CD4-positive, alpha-beta T cell (primary cell): ENCODE measurements at regions of chr10 and their contacts with region 1.

Region 1: GRCh38 chr10:99435986-99436638 is 5.7 kb upstream of the GOT1 start:
- DNase-seq: peak in 3 of 14 experiments; percentile 52 to 61 (median 58)
- ATAC-seq: peak; percentile 61
- H3K4me3 ChIP-seq: no peak overlapping the region
- H3K4me3 Mint-ChIP-seq: peak overlapping the region; percentile 0
- H3K27ac ChIP-seq: no peak overlapping the region
- H3K27ac Mint-ChIP-seq: no peak overlapping the region
- H3K4me1 ChIP-seq: peaks cover 5% of the 10 kb centered on the region
- H3K4me1 Mint-ChIP-seq: peaks cover 38% of the 10 kb centered on the region
- H3K27me3 ChIP-seq: no peaks in the 10 kb centered on the region
- H3K27me3 Mint-ChIP-seq: no peaks in the 10 kb centered on the region
- CTCF ChIP-seq: peak; percentile 78

Region 2: GRCh38 chr10:99612167-99612831 is 176.2 kb after region 1 on chr10:
- CTCF ChIA-PET with region 1: interaction called, 7 read pairs
- POLR2A ChIA-PET with region 1: no interaction called
- intact Hi-C with region 1: loop called (anchors 2 to 5 kb)
- DNase-seq: peak in 4 of 14 experiments; percentile 38 to 75 (median 70)
- ATAC-seq: peak; percentile 71
- H3K4me3 ChIP-seq: no peak overlapping the region
- H3K4me3 Mint-ChIP-seq: peak overlapping the region; percentile 58
- H3K27ac ChIP-seq: peak overlapping the region in 1 of 2 donors; percentile 7
- H3K27ac Mint-ChIP-seq: peak overlapping the region; percentile 48
- H3K4me1 ChIP-seq: peaks cover 7% of the 10 kb centered on the region
- H3K4me1 Mint-ChIP-seq: peaks cover 36% of the 10 kb centered on the region
- H3K27me3 ChIP-seq: no peaks in the 10 kb centered on the region
- H3K27me3 Mint-ChIP-seq: no peaks in the 10 kb centered on the region
- CTCF ChIP-seq: peak; percentile 90

Region 3: GRCh38 chr10:99659031-99659867 is 223.1 kb after region 1 on chr10 and contains the start of gene ENTPD7:
- CTCF ChIA-PET with region 1: interaction called, 3 read pairs
- POLR2A ChIA-PET with region 1: interaction called, 4 read pairs
- intact Hi-C with region 1: loop called in 1 of 2 experiments (anchors 2 kb)
- DNase-seq: peak; percentile 71 to 94 (median 84)
- ATAC-seq: peak; percentile 98
- H3K4me3 ChIP-seq: peak within 1 kb of the TSS; percentile 85
- H3K4me3 Mint-ChIP-seq: peak within 1 kb of the TSS; percentile 87
- H3K27ac ChIP-seq: peak within 1 kb of the TSS in 1 of 2 donors; percentile 7
- H3K27ac Mint-ChIP-seq: peak within 1 kb of the TSS; percentile 46
- H3K4me1 ChIP-seq: peaks cover 16% of the 10 kb centered on the region
- H3K4me1 Mint-ChIP-seq: peaks cover 28% of the 10 kb centered on the region
- H3K27me3 ChIP-seq: no peaks in the 10 kb centered on the region
- H3K27me3 Mint-ChIP-seq: peaks cover 11% of the 10 kb centered on the region
- CTCF ChIP-seq: peak; percentile 29
- total RNA-seq, gene ENTPD7: 1.1 to 1.4 TPM

Region 4: DNA sequence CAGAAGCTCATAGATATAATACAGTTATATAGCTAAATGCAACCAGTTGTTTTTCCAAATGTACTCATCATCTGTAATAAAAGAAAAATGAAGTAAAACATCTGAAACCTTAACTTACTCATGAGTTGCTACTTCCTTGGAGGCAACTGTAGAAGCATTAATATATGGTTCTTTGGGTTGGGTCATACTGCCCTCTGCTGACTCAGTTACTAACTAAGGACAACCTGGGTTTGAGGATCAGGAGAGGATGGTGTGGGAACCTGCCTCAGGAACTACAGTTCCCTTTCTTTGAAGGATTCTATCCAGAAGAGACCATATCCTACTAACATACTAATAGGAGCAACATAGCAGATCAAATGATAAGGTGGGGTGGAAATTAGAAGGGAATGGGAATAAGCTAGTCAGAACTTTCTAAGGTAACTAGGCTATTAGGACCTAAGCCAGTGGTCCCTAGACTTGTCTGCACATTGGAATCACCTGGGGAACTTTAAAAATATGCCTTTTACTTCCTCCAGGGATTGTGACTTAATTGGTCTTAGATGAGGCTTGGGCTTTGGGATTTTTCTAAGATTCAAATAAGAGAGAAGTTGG is 275.1 kb after region 1 on chr10:
- CTCF ChIA-PET with region 1: interaction called, 4 read pairs
- POLR2A ChIA-PET with region 1: no interaction called
- intact Hi-C with region 1: loop called (anchors 1 to 2 kb)
- DNase-seq: peak in 4 of 14 experiments; percentile 40 to 67 (median 55)
- ATAC-seq: peak; percentile 69
- H3K4me3 ChIP-seq: no peak overlapping the region
- H3K4me3 Mint-ChIP-seq: no peak overlapping the region
- H3K27ac ChIP-seq: no peak overlapping the region
- H3K27ac Mint-ChIP-seq: no peak overlapping the region
- H3K4me1 ChIP-seq: no peaks in the 10 kb centered on the region
- H3K4me1 Mint-ChIP-seq: no peaks in the 10 kb centered on the region
- H3K27me3 ChIP-seq: no peaks in the 10 kb centered on the region
- H3K27me3 Mint-ChIP-seq: no peaks in the 10 kb centered on the region
- CTCF ChIP-seq: peak; percentile 59

Region 5: DNA sequence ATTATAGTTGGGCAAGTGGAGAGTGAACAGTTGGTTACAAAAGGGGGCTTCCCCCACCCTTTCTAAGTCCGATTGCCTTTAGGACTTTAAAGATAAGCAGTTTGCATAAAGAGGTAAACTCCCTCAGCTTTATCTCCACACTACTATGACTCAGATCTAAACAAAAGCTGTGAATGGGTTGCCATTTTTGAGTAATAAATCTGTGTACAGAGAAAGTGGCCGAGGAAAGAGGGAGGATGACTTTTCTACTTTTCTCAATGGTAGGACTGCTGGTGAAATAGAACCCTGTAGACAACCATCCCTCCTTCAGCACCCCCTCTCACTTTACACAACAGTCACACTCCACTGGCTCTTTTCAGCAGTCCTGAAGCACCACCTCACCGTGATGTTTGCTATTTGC is 502.5 kb after region 1 on chr10:
- CTCF ChIA-PET with region 1: no interaction called
- POLR2A ChIA-PET with region 1: no interaction called
- intact Hi-C with region 1: no loop called
- DNase-seq: no peak
- ATAC-seq: no peak
- H3K4me3 ChIP-seq: no peak overlapping the region
- H3K4me3 Mint-ChIP-seq: no peak overlapping the region
- H3K27ac ChIP-seq: no peak overlapping the region
- H3K27ac Mint-ChIP-seq: no peak overlapping the region
- H3K4me1 ChIP-seq: no peaks in the 10 kb centered on the region
- H3K4me1 Mint-ChIP-seq: no peaks in the 10 kb centered on the region
- H3K27me3 ChIP-seq: no peaks in the 10 kb centered on the region
- H3K27me3 Mint-ChIP-seq: no peaks in the 10 kb centered on the region
- CTCF ChIP-seq: no peak

Region 6: DNA sequence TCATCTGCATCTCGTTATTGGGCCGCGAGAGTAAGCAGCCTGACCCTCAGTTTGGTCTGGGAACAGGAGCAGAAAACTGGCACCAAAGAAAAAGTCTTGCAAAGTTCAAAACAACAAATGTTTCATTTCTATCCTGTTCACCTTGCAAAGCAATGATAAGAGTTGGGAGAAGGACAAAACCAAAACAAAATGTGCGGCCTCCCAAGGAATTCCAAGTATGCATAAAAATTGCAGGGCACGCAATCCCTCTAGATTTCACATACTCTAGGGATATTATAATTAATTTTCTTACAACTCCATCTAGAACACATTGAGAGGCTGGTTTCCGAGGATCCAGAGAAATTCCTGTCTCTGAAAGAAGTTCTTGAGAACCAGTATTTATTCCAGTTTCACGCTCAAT is 773.2 kb after region 1 on chr10:
- CTCF ChIA-PET with region 1: no interaction called
- POLR2A ChIA-PET with region 1: no interaction called
- intact Hi-C with region 1: no loop called
- DNase-seq: no peak
- ATAC-seq: no peak
- H3K4me3 ChIP-seq: no peak overlapping the region
- H3K4me3 Mint-ChIP-seq: no peak overlapping the region
- H3K27ac ChIP-seq: no peak overlapping the region
- H3K27ac Mint-ChIP-seq: no peak overlapping the region
- H3K4me1 ChIP-seq: no peaks in the 10 kb centered on the region
- H3K4me1 Mint-ChIP-seq: no peaks in the 10 kb centered on the region
- H3K27me3 ChIP-seq: no peaks in the 10 kb centered on the region
- H3K27me3 Mint-ChIP-seq: no peaks in the 10 kb centered on the region
- CTCF ChIP-seq: no peak